Activated T-helper 1 cell treated with anti-CD3 and anti-CD28 coated beads, Interleukin-12 subunit alpha, Interleukin-12 subunit beta, Interleukin-2, Interleukin-4 antibody, amounts not matched to agents 30 ng/mL and 10 ng/mL and 1 ng/mL, durations not matched to agents 14 hours and 24 hours and 36 hours (primary cell): ENCODE measurements at regions of chr7 and their contacts with region 1.

Region 1: GRCh38 chr7:94657771-94658693 is 2.1 kb upstream of the SGCE start:
- DNase-seq: peak; percentile 86
- H3K4me3 Mint-ChIP-seq: peak overlapping the region; percentile 83
- H3K27ac Mint-ChIP-seq: no peak overlapping the region
- H3K4me1 Mint-ChIP-seq: peaks cover 19% of the 10 kb centered on the region
- H3K27me3 Mint-ChIP-seq: peaks cover 26% of the 10 kb centered on the region

Region 2: DNA sequence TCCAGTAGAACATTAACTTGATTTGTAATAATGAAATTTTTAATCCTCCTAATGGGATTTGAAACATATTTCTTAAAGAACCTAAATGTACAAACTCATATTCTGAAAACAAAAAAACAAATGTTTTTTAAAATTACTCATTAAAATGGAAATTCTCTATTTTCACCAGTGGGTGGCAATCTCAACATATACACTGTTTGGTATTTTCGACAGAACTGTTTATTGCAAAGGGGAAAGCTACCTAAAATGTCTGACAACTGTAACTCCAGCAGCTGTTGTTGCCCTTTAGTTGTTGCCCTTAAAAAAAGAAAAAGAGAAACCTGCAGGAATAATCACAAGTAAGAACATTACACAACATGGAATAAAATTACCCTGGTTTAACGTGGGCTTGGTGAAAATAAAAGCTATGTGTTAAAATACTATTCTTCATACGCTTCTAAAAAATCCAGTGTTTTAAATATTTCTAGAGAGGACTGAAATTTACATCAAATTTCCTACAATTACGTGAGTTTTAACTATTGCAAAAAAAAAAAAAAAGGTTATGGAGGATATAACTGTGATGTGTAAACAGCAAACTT is 208.8 kb before region 1 on chr7:
- intact Hi-C with region 1: loop called (anchors 1 kb)
- DNase-seq: no peak
- H3K4me3 Mint-ChIP-seq: no peak overlapping the region
- H3K27ac Mint-ChIP-seq: no peak overlapping the region
- H3K4me1 Mint-ChIP-seq: no peaks in the 10 kb centered on the region
- H3K27me3 Mint-ChIP-seq: peaks cover 6% of the 10 kb centered on the region

Region 3: DNA sequence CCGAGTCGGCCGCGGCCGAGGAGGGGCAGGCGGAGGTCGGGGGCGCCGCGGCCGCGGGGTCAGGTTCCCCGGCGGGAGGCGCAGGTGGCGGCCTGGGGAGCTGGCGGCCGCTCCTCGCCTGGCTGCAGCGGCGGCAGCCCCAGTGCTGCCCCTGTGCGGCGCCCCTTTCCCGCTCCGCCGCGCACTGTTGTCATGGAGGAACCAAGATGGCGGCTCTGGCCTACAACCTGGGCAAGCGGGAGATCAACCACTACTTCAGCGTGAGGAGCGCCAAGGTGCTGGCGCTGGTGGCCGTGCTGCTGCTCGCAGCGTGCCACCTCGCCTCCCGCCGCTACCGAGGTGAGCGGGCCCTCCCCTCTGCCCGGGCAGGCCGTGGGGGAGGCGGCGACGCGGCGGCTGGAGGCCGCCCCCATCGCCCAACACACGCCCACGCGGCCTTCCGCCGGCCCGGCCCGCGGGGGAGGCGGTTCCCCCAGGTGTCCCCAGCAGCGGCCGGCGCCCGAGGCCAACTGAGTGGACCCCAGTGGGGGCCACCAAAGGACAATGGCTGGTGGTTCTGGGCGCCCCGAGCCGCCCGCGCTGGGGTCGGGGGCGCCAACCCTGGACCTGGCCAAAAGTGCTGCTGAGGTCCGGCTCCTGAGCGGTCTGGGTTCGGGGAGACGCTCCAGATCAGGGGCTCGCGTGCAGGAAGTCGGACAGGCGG is 148.0 kb before region 1 on chr7:
- intact Hi-C with region 1: loop called (anchors 1 kb)
- DNase-seq: peak; percentile 60
- H3K4me3 Mint-ChIP-seq: peak overlapping the region; percentile 86
- H3K27ac Mint-ChIP-seq: peak overlapping the region; percentile 88
- H3K4me1 Mint-ChIP-seq: peaks cover 30% of the 10 kb centered on the region
- H3K27me3 Mint-ChIP-seq: no peaks in the 10 kb centered on the region

Region 4: DNA sequence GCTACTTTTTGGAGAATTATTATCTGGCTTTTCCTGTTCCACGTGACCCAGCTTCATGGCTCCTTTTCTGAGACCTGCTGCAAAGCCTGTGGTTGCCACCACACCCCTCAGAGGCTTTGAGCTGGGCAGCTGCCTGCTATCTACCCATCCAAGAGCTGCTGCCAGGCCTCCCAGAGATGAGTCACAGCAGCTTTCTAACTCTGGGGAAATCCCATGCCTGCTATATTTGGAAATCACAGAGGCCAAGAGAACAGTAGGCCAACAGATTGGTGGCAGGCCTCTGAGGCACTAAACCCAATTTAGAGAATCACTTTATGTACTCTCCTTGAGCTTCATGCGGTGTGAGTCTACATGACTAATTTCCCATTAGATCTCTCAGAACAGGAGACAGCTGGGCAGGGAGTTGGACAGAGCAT is 37.3 kb before region 1 on chr7:
- intact Hi-C with region 1: loop called (anchors 2 kb)
- DNase-seq: peak; percentile 17
- H3K4me3 Mint-ChIP-seq: peak overlapping the region; percentile 27
- H3K27ac Mint-ChIP-seq: no peak overlapping the region
- H3K4me1 Mint-ChIP-seq: peaks cover 12% of the 10 kb centered on the region
- H3K27me3 Mint-ChIP-seq: peaks cover 3% of the 10 kb centered on the region

Region 5: DNA sequence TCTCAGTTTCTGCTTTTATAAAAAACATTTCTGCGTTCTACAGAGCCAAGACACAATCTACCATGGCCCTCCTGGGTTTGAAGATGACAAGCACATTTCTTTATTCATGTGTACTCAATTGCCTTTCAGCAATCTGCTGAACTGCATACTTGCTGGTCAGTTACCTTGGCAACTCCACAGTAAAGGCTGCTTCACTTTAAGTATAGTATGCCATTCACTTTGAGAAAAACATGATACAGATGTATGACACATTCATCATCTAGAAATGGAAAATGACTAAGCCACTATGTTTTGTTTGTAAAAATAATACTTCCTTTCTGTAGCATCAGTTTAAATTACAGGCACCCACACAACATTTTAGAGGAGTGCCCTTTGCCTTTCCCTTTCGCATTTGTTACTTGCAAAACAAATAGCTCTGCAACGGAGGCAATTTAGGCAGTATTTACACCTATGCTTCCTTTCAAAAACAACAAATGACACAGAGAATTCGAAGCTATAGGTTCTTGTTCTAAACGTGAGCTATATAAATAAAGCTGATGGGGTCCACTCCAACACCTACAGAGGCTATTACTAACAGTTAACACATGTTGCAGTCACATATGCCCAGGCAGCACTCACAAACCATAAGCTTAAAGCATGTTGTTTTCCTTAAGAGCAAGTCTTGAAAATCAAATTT is 25.6 kb before region 1 on chr7:
- intact Hi-C with region 1: loop called (anchors 2 kb)
- DNase-seq: no peak
- H3K4me3 Mint-ChIP-seq: no peak overlapping the region
- H3K27ac Mint-ChIP-seq: no peak overlapping the region
- H3K4me1 Mint-ChIP-seq: no peaks in the 10 kb centered on the region
- H3K27me3 Mint-ChIP-seq: no peaks in the 10 kb centered on the region

Region 6: DNA sequence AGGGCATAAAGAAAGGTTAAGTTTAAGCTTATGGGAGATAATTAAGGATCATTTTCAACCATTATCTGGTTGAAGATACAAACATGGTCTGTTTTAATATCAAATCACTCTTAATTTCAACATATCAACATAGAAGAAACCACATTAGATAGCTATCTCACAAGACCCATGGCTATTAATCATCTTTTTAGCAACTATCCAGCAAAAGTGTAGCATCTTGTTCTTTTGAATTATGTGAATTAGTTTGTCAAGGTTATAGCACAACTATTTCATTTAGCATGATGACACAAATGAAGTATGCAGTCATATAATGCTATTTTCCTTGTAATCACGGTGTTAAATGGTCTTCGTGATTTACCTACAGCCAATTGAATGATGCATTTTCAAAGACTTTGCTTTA is 190.5 kb after region 1 on chr7:
- intact Hi-C with region 1: no loop called
- DNase-seq: no peak
- H3K4me3 Mint-ChIP-seq: no peak overlapping the region
- H3K27ac Mint-ChIP-seq: no peak overlapping the region
- H3K4me1 Mint-ChIP-seq: no peaks in the 10 kb centered on the region
- H3K27me3 Mint-ChIP-seq: no peaks in the 10 kb centered on the region

Region 7: DNA sequence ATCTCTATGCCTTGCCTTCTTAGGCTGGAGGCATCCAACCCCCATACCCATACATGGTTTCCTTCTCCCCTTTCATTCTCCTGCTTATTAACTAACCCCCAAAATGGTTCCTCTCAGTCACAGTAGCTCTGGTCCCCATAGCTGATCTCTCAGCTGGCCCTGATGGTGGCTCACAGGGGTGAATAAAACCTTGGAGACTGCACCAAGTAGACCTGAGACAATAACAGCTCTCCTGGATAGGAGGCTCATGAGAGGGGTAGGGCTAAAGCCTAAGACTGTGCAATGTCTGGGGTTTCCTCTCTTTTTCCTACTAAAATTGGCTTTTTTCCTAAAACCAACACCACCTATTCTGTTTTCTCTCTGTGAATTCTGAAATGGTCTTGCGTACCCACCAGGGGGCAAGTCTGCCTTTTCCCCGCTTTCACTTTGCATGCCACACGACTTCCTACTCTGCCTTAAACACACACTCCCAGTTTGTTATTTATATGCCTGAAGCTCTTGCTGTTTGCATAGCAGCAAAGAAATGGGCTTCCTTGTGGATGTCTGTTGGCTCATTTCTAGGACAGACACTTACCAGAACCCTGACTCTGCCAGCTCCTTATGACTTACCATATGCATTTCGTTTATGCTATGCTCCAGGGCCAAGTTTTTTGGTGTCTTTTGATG is 684.7 kb after region 1 on chr7:
- intact Hi-C with region 1: no loop called
- DNase-seq: no peak
- H3K4me3 Mint-ChIP-seq: no peak overlapping the region
- H3K27ac Mint-ChIP-seq: no peak overlapping the region
- H3K4me1 Mint-ChIP-seq: no peaks in the 10 kb centered on the region
- H3K27me3 Mint-ChIP-seq: no peaks in the 10 kb centered on the region